ENCODE measurements at regions of chr18 and their contacts with region 1.

Region 1: DNA sequence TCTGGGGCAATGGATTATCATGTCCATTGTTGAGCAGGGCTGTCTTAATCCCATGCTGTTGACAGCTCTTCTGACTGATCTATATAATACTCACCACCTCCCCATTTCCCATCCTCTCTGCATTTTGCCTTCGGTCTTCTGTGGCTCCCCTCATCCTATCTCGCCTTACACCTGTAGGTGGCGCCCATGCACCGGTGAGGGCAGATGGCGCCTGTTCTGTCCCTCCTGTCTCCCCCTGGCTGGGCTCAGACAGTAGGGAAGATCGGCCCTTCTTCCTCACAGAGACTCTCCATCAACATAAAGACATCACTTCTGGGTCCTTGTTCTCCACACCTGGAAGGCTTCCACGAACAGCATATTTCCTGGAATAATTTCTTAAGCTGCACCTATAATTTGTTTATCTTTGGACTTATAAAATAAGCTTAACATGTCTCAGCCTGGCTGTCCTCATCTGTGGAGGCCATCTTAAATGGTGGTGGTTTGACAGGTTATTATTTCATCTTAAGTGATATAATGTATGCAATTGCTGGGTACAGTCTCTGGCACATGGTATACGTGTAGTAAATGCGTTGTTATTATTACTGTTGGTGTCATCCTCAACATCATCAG is 10.9 kb upstream of the CDH20 start:
- DNase-seq: peak; percentile 69
- H3K4me3 Mint-ChIP-seq: no peak overlapping the region
- H3K27ac Mint-ChIP-seq: no peak overlapping the region
- H3K4me1 Mint-ChIP-seq: no peaks in the 10 kb centered on the region
- H3K27me3 Mint-ChIP-seq: peaks cover 15% of the 10 kb centered on the region
- CTCF ChIP-seq: peak; percentile 89

Region 2: GRCh38 chr18:60684843-60685513 is 637.4 kb before region 1 on chr18:
- CTCF ChIA-PET with region 1: interaction called, 8 read pairs
- POLR2A ChIA-PET with region 1: no interaction called
- intact Hi-C with region 1: loop called (anchors 5 kb)
- DNase-seq: peak; percentile 46
- H3K4me3 Mint-ChIP-seq: no peak overlapping the region
- H3K27ac Mint-ChIP-seq: no peak overlapping the region
- H3K4me1 Mint-ChIP-seq: no peaks in the 10 kb centered on the region
- H3K27me3 Mint-ChIP-seq: peaks cover 63% of the 10 kb centered on the region
- CTCF ChIP-seq: peak; percentile 67

Region 3: GRCh38 chr18:60809937-60810336 is 512.4 kb before region 1 on chr18:
- CTCF ChIA-PET with region 1: interaction called, 24 read pairs
- POLR2A ChIA-PET with region 1: interaction called, 3 read pairs
- intact Hi-C with region 1: loop called (anchors 5 kb)
- DNase-seq: peak; percentile 29
- H3K4me3 Mint-ChIP-seq: no peak overlapping the region
- H3K27ac Mint-ChIP-seq: no peak overlapping the region
- H3K4me1 Mint-ChIP-seq: peaks cover 16% of the 10 kb centered on the region
- H3K27me3 Mint-ChIP-seq: peaks cover 18% of the 10 kb centered on the region
- CTCF ChIP-seq: no peak

Region 4: GRCh38 chr18:61085761-61086160 is 236.6 kb before region 1 on chr18:
- CTCF ChIA-PET with region 1: interaction called, 3 read pairs
- POLR2A ChIA-PET with region 1: no interaction called
- intact Hi-C with region 1: loop called (anchors 5 kb)
- DNase-seq: no peak
- H3K4me3 Mint-ChIP-seq: no peak overlapping the region
- H3K27ac Mint-ChIP-seq: no peak overlapping the region
- H3K4me1 Mint-ChIP-seq: peaks cover 6% of the 10 kb centered on the region
- H3K27me3 Mint-ChIP-seq: no peaks in the 10 kb centered on the region
- CTCF ChIP-seq: no peak

Region 5: DNA sequence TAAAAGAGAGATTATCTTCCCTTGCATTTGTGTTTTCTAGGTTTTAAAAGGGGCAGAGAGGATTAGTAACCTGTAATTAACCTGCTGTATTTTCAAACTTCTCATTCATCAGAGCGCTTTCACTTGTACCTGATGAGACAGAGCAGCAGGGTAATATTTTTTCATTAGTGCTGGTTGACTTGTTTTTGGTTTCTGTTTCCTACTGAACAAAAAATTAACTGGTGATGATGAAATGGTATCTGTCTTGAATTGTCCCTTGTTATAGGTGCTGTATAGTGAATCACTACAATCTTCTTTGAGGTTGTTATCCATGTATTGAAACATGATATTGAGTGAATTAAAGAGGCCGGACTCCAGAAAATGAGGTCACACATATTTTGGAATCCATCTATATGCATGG is 48.7 kb after region 1 on chr18:
- CTCF ChIA-PET with region 1: no interaction called
- POLR2A ChIA-PET with region 1: no interaction called
- intact Hi-C with region 1: loop called (anchors 10 kb)
- DNase-seq: no peak
- H3K4me3 Mint-ChIP-seq: no peak overlapping the region
- H3K27ac Mint-ChIP-seq: no peak overlapping the region
- H3K4me1 Mint-ChIP-seq: no peaks in the 10 kb centered on the region
- H3K27me3 Mint-ChIP-seq: peaks cover 60% of the 10 kb centered on the region
- CTCF ChIP-seq: no peak

Region 6: GRCh38 chr18:61489334-61489733 is 167.0 kb after region 1 on chr18:
- CTCF ChIA-PET with region 1: interaction called, 10 read pairs
- POLR2A ChIA-PET with region 1: no interaction called
- intact Hi-C with region 1: no loop called
- DNase-seq: no peak
- H3K4me3 Mint-ChIP-seq: no peak overlapping the region
- H3K27ac Mint-ChIP-seq: no peak overlapping the region
- H3K4me1 Mint-ChIP-seq: no peaks in the 10 kb centered on the region
- H3K27me3 Mint-ChIP-seq: peaks cover 10% of the 10 kb centered on the region
- CTCF ChIP-seq: no peak

Region 7: GRCh38 chr18:61496374-61496773 is 174.0 kb after region 1 on chr18:
- CTCF ChIA-PET with region 1: interaction called, 173 read pairs
- POLR2A ChIA-PET with region 1: no interaction called
- intact Hi-C with region 1: no loop called
- DNase-seq: no peak
- H3K4me3 Mint-ChIP-seq: no peak overlapping the region
- H3K27ac Mint-ChIP-seq: no peak overlapping the region
- H3K4me1 Mint-ChIP-seq: no peaks in the 10 kb centered on the region
- H3K27me3 Mint-ChIP-seq: no peaks in the 10 kb centered on the region
- CTCF ChIP-seq: no peak

Region 8: GRCh38 chr18:62037989-62038778 is 715.8 kb after region 1 on chr18:
- CTCF ChIA-PET with region 1: no interaction called
- POLR2A ChIA-PET with region 1: no interaction called
- intact Hi-C with region 1: no loop called
- DNase-seq: no peak
- H3K4me3 Mint-ChIP-seq: no peak overlapping the region
- H3K27ac Mint-ChIP-seq: no peak overlapping the region
- H3K4me1 Mint-ChIP-seq: no peaks in the 10 kb centered on the region
- H3K27me3 Mint-ChIP-seq: no peaks in the 10 kb centered on the region
- CTCF ChIP-seq: no peak